ENCODE measurements at regions of chr6 and their contacts with region 1.

Region 1: GRCh38 chr6:110981202-110981600 is 637 bp upstream of the RPF2 start:
- DNase-seq: peak in 1 of 35 experiments; percentile 45
- ATAC-seq: no peak
- H3K4me3 ChIP-seq: peak overlapping the region; percentile 94 to 98
- H3K4me3 Mint-ChIP-seq: peak overlapping the region; percentile 95 to 99 (median 96)
- H3K27ac ChIP-seq: peak overlapping the region; percentile 84
- H3K27ac Mint-ChIP-seq: peak overlapping the region; percentile 92 to 99
- H3K4me1 ChIP-seq: peaks cover 7 to 18% of the 10 kb centered on the region in 2 experiments
- H3K4me1 Mint-ChIP-seq: peaks cover 39 to 47% (median 42%) of the 10 kb centered on the region in 3 donors
- H3K27me3 ChIP-seq: no peaks in the 10 kb centered on the region
- H3K27me3 Mint-ChIP-seq: no peaks in the 10 kb centered on the region

Region 2: DNA sequence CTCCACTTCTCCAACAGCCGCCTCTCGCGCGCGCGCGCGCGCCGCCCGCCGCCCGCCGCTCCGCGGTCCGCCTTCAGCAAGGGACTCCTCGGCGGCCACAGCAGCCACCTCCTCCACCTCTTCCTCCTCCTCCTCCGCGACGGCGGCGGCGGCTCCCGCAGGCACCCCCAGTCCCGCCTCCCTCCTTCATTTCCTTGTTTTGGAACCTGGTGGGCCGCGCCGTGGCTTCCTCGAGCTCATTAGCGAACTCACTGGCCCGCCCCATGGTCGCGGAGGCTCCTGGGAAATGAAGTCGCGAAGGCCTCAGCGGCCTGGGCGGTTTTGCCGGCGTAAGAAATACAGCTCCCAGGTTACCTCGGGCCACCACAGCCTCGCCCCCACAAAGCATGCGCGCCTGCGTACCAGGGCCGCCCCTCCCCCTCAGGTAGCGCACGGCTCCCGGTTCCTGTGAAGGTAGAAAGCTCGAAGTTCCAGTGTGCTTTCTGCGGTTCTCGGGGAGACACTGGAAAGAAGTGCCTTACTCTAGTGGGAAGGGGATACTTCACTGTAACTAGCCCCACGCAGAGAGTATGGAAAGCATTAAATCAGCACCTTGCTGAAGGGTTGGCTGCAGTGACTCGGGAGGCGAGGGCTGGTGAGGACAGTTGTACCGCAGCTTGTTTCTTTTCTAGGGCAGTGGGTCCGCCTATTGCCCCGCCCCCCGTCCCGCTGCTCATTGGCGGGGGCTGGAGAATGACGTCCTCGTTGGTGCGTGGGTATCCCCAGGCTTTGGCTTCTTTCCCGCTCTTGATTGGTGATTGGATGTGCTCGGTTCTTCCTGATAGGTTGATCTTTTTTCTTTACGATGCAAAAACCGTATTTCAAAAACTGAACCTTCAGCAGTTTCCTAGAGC is 165.7 kb before region 1 on chr6 and contains the start of gene CDK19:
- CTCF ChIA-PET with region 1: interaction called in 1 of 2 experiments, 8 read pairs
- POLR2A ChIA-PET with region 1: interaction called, 4 to 22 read pairs
- DNase-seq: peak; percentile 96 to 99 (median 98)
- ATAC-seq: peak; percentile 84 to 88 (median 84)
- H3K4me3 ChIP-seq: peak within 1 kb of the TSS; percentile 75 to 94
- H3K4me3 Mint-ChIP-seq: peak within 1 kb of the TSS; percentile 94 to 99 (median 99)
- H3K27ac ChIP-seq: peak within 1 kb of the TSS; percentile 81
- H3K27ac Mint-ChIP-seq: peak within 1 kb of the TSS; percentile 97 to 99
- H3K4me1 ChIP-seq: peaks cover 11 to 15% of the 10 kb centered on the region in 2 experiments
- H3K4me1 Mint-ChIP-seq: peaks cover 20 to 33% (median 32%) of the 10 kb centered on the region in 3 donors
- H3K27me3 ChIP-seq: no peaks in the 10 kb centered on the region
- H3K27me3 Mint-ChIP-seq: no peaks in the 10 kb centered on the region
- total RNA-seq, gene CDK19: 11.4 to 16.1 (median 14.2) TPM

Region 3: GRCh38 chr6:110902091-110902490 is 79.1 kb before region 1 on chr6:
- CTCF ChIA-PET with region 1: no interaction called
- POLR2A ChIA-PET with region 1: no interaction called
- DNase-seq: no peak
- ATAC-seq: no peak
- H3K4me3 ChIP-seq: no peak overlapping the region
- H3K4me3 Mint-ChIP-seq: no peak overlapping the region
- H3K27ac ChIP-seq: no peak overlapping the region
- H3K27ac Mint-ChIP-seq: no peak overlapping the region
- H3K4me1 ChIP-seq: no peaks in the 10 kb centered on the region
- H3K4me1 Mint-ChIP-seq: peaks cover 0 to 1% (median 0%) of the 10 kb centered on the region in 3 donors
- H3K27me3 ChIP-seq: no peaks in the 10 kb centered on the region
- H3K27me3 Mint-ChIP-seq: peaks cover 0 to under 1% of the 10 kb centered on the region in 2 donors

Region 4: GRCh38 chr6:110958329-110959192 is 22.6 kb before region 1 on chr6 and contains the start of gene GTF3C6:
- CTCF ChIA-PET with region 1: interaction called in 1 of 2 experiments, 22 read pairs
- POLR2A ChIA-PET with region 1: interaction called, 6 to 30 read pairs
- DNase-seq: peak; percentile 78 to 96 (median 91)
- ATAC-seq: peak; percentile 99 to 100 (median 99)
- H3K4me3 ChIP-seq: peak within 1 kb of the TSS; percentile 88 to 98
- H3K4me3 Mint-ChIP-seq: peak within 1 kb of the TSS; percentile 90 to 97 (median 95)
- H3K27ac ChIP-seq: peak within 1 kb of the TSS; percentile 94
- H3K27ac Mint-ChIP-seq: peak within 1 kb of the TSS; percentile 92 to 99
- H3K4me1 ChIP-seq: peaks cover 7 to 16% of the 10 kb centered on the region in 2 experiments
- H3K4me1 Mint-ChIP-seq: peaks cover 14 to 22% (median 18%) of the 10 kb centered on the region in 3 donors
- H3K27me3 ChIP-seq: no peaks in the 10 kb centered on the region
- H3K27me3 Mint-ChIP-seq: no peaks in the 10 kb centered on the region
- total RNA-seq, gene GTF3C6: 21.4 to 33.9 (median 30.3) TPM